ENCODE measurements at regions of chr19 and their contacts with region 1.

Region 1: GRCh38 chr19:4267101-4267900 is 11.8 kb upstream of the SHD start:
- DNase-seq: peak; percentile 27 to 42
- H3K4me3 ChIP-seq: no peak overlapping the region
- H3K27ac ChIP-seq: no peak overlapping the region
- H3K4me1 ChIP-seq: no peaks in the 10 kb centered on the region
- H3K27me3 ChIP-seq: no peaks in the 10 kb centered on the region
- CTCF ChIP-seq: peak; percentile 68

Region 2: DNA sequence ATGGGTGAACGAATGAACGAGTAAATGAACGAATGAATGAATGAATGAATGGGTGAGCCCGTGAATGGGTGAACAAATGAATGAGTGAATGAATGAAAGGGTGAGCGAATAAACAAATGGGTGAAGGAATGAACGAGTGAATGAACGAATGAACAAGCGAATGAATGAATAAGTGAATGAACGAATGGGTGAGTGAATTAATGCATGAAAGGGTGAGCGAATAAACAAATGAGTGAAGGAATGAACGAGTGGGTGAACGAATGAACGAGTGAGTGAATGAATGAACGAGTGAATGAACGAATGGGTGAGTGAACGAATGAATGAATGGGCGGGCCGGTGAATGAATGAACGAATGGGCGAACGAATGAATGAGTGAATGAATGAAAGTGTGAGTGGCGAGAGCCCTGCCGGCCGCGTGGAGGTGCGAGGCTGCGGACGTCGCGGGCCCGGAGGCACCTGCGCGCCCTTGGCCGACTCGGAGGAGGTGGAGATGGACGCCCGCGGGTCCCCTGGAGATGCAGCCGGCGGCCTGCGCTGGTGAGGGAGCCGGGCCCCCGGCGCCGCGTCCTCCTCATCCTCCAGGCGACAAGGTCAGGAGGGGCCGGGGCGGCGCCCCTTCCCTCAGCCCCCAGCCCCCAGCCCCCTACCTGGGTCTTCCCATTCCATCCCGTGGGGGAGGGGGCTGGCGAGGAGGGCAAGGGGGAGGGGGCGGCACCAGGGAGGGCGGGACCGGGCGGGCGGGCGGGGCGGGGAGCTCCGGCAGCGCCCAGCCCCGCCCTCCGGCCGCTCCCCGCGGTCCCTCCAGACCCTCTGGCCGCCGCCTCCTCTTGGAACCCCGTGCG is 69.5 kb before region 1 on chr19:
- CTCF ChIA-PET with region 1: no interaction called
- POLR2A ChIA-PET with region 1: no interaction called
- intact Hi-C with region 1: no loop called
- DNase-seq: no peak
- H3K4me3 ChIP-seq: no peak overlapping the region
- H3K27ac ChIP-seq: no peak overlapping the region
- H3K4me1 ChIP-seq: no peaks in the 10 kb centered on the region
- H3K27me3 ChIP-seq: no peaks in the 10 kb centered on the region
- CTCF ChIP-seq: no peak

Region 3: DNA sequence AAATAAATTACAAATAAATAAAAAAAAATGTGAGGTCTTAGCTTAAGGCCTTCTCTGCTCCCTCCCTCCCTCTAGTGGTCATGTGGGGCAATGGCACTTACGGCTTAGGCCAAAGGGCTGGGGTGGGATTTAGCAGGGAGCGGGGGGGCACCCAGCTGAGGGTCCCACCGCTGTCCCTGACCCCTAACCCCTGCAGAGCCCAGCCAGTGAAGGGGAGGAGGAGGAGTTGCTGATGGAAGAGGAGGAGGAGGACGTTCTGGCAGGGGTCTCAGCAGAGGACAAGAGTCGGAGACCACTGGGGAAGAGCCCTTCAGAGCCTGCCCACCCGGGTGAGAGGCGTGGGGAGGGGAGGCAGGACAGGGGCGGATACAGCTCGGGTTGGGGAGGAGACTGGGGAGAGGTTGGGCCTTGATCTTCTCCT is 85.4 kb after region 1 on chr19:
- CTCF ChIA-PET with region 1: interaction called, 9 read pairs
- POLR2A ChIA-PET with region 1: no interaction called
- intact Hi-C with region 1: loop called (anchors 1 kb)
- DNase-seq: peak in 1 of 2 experiments; percentile 49
- H3K4me3 ChIP-seq: no peak overlapping the region
- H3K27ac ChIP-seq: no peak overlapping the region
- H3K4me1 ChIP-seq: no peaks in the 10 kb centered on the region
- H3K27me3 ChIP-seq: no peaks in the 10 kb centered on the region
- CTCF ChIP-seq: peak; percentile 87

Region 4: GRCh38 chr19:4534836-4535658 is 267.7 kb after region 1 on chr19 and contains the start of gene PLIN5:
- CTCF ChIA-PET with region 1: interaction called, 3 read pairs
- POLR2A ChIA-PET with region 1: interaction called, 14 read pairs
- intact Hi-C with region 1: no loop called
- DNase-seq: peak; percentile 55 to 83
- H3K4me3 ChIP-seq: peak within 1 kb of the TSS; percentile 50; the same call in 1 of the 2 replicates
- H3K27ac ChIP-seq: no peak within 1 kb of the TSS
- H3K4me1 ChIP-seq: peaks cover 16% of the 10 kb centered on the region
- H3K27me3 ChIP-seq: no peaks in the 10 kb centered on the region
- CTCF ChIP-seq: no peak
- total RNA-seq, gene PLIN5: 4.3 and 4.4 TPM in 2 replicates

Measured in PC-9 (cell line).